Mammary epithelial cell (primary cell): ENCODE measurements at regions of chr12 and their contacts with region 1.

Region 1: GRCh38 chr12:53770281-53770680 is 18.5 kb upstream of the CISTR start:
- DNase-seq: peak; percentile 93
- H3K4me3 ChIP-seq: no peak overlapping the region
- H3K27ac ChIP-seq: peak overlapping the region; percentile 57
- H3K4me1 ChIP-seq: peaks cover 35% of the 10 kb centered on the region
- H3K27me3 ChIP-seq: no peaks in the 10 kb centered on the region
- CTCF ChIP-seq: no peak

Region 2: DNA sequence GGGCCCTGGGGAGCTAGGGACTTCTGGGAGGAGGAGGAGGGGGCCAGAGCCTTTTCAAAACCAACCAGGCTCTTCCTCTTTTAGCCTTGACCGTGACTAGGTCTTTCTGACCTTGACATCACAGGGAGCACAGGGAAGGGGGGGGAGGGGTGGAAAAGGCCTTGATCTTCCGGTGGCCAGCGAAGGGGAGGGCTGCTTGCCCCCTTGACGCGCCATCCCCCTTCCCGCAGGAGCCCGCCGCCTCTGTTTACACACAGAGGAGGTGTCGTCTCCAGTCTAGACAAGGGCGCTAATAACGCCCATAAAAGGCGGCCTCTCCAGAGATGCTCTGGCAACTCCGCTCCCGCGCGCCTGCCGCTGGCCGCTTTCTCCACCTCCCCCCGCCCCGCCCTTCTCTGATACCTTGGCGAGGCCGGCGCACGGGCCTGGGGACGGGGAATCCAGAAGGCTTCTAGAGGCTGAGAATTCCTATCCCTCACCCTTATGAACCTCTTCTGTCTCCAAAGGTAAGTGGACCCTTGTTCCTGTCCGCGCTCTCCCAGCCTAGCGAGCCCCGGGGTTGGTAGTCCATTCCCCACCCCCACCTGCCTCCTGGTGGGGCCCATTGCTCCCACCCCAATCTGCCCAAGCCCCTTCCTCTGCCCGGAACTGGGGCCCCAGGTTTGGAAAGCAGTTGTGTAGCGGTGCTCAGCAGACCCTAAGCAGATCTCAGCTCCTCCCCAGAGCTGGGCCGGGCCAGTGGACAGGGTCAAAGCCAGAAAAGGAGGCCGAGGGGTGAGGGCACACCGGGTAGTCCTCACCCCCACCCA is 179.6 kb after region 1 on chr12:
- CTCF ChIA-PET with region 1: no interaction called
- dilution Hi-C with region 1: no loop called
- in situ Hi-C with region 1: loop called in 1 of 2 experiments (anchors 25 kb)
- intact Hi-C with region 1: loop called (anchors 1 kb)
- DNase-seq: no peak
- H3K4me3 ChIP-seq: no peak overlapping the region
- H3K27ac ChIP-seq: no peak overlapping the region
- H3K4me1 ChIP-seq: peaks cover 9% of the 10 kb centered on the region
- H3K27me3 ChIP-seq: peaks cover 10% of the 10 kb centered on the region
- CTCF ChIP-seq: no peak

Region 3: DNA sequence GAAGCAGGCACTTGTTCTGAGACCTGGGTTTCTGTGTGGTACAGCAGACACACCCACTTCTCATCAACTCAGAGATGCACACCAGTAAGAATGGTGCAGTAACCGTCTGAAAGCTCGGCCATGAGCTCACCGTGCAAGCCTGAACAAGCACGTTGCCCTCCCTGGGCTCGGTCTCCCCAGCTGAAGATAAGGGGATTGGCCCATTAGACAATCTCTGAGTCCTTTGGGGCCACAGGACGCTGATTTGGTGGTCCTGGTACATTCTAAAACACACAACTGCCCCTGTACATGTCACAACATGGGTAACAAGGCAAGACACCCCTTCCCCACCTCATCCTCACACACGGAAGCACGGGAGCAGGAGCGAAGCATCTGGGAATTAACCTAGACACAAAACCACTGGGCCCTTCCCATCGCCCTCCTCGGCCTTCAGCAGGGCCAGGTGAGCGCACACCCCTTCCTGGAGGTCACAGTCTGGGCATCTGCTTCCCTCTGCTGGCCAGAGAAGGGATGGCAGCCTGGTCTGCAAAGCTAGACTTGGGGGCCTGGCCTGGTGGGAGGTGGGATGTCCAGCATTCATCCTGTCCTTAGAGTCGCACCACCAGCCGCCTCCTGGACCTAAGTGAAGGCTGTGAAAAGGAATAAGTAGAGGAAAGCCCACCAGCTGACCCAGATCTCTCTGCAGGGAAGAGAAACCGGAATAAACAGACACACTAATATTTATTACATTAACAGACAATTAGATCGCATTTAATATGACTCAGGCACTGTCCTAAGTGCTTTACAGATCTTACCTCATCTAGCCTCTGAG is 437.4 kb after region 1 on chr12:
- CTCF ChIA-PET with region 1: no interaction called
- dilution Hi-C with region 1: no loop called
- in situ Hi-C with region 1: loop called (anchors 10 kb)
- intact Hi-C with region 1: loop called (anchors 1 kb)
- DNase-seq: peak; percentile 81
- H3K4me3 ChIP-seq: no peak overlapping the region
- H3K27ac ChIP-seq: no peak overlapping the region
- H3K4me1 ChIP-seq: peaks cover 13% of the 10 kb centered on the region
- H3K27me3 ChIP-seq: no peaks in the 10 kb centered on the region
- CTCF ChIP-seq: peak; percentile 97 to 99

Region 4: GRCh38 chr12:54294152-54294952 is 524.1 kb after region 1 on chr12:
- CTCF ChIA-PET with region 1: interaction called, 25 read pairs
- dilution Hi-C with region 1: no loop called
- in situ Hi-C with region 1: no loop called
- intact Hi-C with region 1: no loop called
- DNase-seq: no peak
- H3K4me3 ChIP-seq: no peak overlapping the region
- H3K27ac ChIP-seq: no peak overlapping the region
- H3K4me1 ChIP-seq: peaks cover under 1% of the 10 kb centered on the region
- H3K27me3 ChIP-seq: no peaks in the 10 kb centered on the region
- CTCF ChIP-seq: peak; percentile 96